ENCODE measurements at regions of chr18 and their contacts with region 1.

Region 1: DNA sequence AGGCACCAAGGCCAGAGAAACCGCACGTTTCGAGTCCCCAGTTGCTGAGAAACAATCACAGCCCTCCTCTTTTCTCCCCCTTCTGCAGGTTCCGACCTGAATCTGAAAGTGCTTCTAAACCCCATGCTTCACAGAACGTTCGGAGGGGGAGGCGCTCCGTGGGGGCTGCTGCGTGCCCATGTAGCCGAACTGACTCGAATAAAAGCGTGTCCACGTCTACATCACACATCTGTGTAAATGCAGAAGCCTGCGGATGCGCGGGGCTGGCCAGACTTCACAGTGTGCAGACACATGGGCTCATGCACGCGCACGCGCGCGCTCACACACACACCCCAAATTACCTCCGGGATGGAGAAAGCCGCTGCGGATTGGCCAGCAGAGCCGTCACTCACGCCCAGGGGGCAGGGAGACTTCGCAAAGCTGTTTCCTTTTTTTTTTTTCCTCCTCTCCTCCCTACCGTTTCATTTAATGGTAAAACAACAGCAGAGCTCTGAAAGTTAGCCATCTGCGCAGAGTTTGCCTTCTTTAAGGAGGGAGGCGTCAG is 2.3 kb downstream of the ZNF516 start:
- DNase-seq: peak; percentile 98
- H3K4me3 Mint-ChIP-seq: peak overlapping the region; percentile 73
- H3K27ac Mint-ChIP-seq: peak overlapping the region; percentile 66
- H3K4me1 Mint-ChIP-seq: peaks cover 17% of the 10 kb centered on the region
- H3K27me3 Mint-ChIP-seq: no peaks in the 10 kb centered on the region
- CTCF ChIP-seq: no peak

Region 2: DNA sequence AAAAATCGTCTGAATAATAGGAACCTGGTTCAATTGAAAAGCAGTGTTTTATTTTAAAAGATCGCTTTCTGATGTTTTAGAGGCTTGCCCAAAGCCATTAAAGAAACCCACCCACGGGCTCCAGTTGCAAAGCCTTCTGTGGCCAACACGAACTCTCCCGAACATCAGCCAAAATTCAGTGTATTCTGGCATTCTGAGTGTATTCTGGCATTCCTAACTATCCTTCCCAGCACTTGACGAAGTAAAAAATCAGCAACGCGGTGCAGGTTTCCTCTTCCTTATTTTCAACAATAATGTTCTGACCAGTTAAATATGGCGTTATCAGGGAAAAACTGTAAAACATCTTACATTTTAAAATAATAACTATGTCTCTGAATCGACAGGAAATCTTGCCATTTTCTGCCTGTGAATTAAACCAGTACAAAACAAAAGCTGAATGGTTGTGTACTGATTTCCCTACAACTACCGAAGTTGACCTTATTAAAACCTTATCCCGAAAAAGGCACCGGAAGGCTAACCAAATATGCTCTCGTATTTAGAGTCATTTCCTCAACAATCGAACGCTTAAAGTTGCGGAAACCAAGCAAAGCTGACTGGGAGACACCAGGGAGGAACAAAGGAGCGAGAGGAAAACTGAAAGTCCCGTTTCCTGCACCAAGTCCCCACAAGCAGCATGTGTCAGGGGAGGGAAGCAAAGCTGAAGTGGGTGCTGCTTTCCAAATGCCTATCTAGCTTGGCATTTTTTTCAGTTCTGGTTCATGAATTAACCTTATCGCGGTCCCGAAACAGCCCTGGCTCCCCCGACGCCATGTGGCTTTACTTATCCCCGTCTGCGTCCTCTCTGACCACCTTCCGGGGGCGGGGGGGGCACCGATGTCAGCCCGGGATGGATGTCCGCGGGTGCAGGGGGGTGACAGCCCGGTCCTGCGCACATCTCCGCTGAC is 42.0 kb before region 1 on chr18:
- CTCF ChIA-PET with region 1: no interaction called
- POLR2A ChIA-PET with region 1: interaction called, 18 read pairs
- intact Hi-C with region 1: loop called (anchors 5 kb)
- DNase-seq: peak; percentile 53
- H3K4me3 Mint-ChIP-seq: peak overlapping the region; percentile 84
- H3K27ac Mint-ChIP-seq: peak overlapping the region; percentile 98
- H3K4me1 Mint-ChIP-seq: peaks cover 57% of the 10 kb centered on the region
- H3K27me3 Mint-ChIP-seq: no peaks in the 10 kb centered on the region
- CTCF ChIP-seq: no peak

Region 3: DNA sequence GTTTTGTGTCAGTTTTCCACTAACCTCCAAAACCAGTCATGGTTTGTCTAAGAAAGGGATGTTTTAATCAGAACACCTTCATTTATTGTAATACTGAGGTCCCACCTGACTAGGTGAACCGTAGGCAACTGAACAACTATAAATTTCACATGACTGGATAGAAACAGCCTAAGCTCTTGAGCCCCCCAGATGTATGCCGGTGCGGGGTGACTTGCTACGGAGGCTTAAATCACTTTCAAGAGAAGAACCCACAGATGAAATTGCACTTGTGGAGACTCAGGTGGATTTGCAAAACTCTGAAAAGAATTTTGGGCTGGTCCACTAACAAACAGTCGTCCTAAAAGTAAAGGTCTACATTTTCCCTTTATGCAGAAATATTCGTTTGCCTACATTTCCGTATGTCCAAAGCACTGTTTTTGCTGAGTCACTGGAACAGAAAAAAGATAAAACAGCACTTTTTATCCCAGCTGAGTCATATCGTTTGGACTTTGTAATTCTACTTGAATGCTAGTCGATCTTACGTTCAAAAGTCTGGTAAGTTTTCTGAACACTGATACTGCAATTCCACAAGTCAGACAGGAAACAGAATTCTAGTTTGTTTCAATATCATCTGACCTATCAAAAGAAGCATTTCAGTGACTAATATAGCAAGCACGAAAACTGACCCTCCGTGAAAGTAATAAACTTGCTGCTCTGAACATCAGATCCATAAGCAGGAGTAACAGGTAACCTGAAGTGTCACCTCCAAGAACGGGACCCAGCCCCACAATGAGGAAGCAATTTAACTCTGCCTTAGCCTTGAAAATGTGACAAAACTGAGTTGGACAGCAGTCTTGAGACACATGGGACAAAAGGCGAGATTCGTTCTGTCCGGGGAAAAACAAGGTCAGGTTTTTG is 15.8 kb before region 1 on chr18:
- CTCF ChIA-PET with region 1: interaction called, 3 read pairs
- POLR2A ChIA-PET with region 1: interaction called, 18 read pairs
- intact Hi-C with region 1: no loop called
- DNase-seq: peak; percentile 60
- H3K4me3 Mint-ChIP-seq: peak overlapping the region; percentile 62
- H3K27ac Mint-ChIP-seq: peak overlapping the region; percentile 74
- H3K4me1 Mint-ChIP-seq: peaks cover 32% of the 10 kb centered on the region
- H3K27me3 Mint-ChIP-seq: no peaks in the 10 kb centered on the region
- CTCF ChIP-seq: no peak

Region 4: DNA sequence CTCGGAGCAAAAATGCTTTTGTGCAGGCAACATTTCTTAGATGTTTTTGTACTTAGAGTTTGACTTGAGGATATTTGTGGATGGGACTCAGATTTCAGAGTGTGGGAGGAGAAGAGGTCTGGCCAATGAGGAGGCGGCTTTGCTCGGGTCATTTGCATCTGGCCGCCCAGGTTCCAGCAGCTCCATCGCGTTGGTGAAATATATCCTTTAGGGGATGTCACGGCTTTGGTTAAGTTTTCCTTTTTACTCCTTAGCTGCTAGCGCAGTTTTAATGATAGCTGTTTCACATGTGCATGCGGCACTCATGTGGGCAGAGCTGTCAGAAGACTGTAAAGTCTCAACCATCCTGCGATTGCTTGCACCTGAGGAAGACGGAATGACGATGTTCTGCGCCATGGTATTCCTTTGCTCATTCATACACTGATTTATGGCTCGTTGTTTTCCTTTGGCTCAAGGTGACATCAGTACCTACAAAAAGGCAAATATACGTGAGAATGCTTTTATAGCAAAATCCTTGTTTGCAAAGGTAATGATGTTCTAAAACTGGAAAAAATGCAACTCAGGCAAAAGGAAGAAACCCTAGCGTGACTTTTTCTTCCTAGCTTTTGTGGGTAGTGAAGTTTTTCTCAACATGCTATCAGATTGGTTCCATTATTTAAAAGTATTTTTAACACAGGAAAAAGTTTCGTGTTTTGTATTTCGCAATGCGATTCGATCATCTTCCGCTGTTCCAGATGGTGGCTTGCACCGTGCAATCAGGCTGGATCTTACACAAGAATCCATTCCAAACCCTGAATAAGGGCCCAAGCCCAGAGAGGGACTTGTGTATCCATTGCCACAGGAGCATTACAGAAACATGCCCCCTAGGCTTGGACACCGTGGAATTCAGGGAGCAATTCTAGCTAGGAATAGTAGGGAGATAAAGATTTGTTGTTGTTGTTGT is 72.8 kb after region 1 on chr18:
- CTCF ChIA-PET with region 1: interaction called, 3 read pairs
- POLR2A ChIA-PET with region 1: interaction called, 62 read pairs
- intact Hi-C with region 1: loop called (anchors 1 kb)
- DNase-seq: peak; percentile 95
- H3K4me3 Mint-ChIP-seq: peak overlapping the region; percentile 64
- H3K27ac Mint-ChIP-seq: peak overlapping the region; percentile 98
- H3K4me1 Mint-ChIP-seq: peaks cover 34% of the 10 kb centered on the region
- H3K27me3 Mint-ChIP-seq: no peaks in the 10 kb centered on the region
- CTCF ChIP-seq: no peak

Region 5: GRCh38 chr18:76610933-76611749 is 118.4 kb after region 1 on chr18:
- CTCF ChIA-PET with region 1: no interaction called
- POLR2A ChIA-PET with region 1: interaction called, 10 read pairs
- intact Hi-C with region 1: no loop called
- DNase-seq: peak; percentile 50
- H3K4me3 Mint-ChIP-seq: peak overlapping the region; percentile 55
- H3K27ac Mint-ChIP-seq: peak overlapping the region; percentile 73
- H3K4me1 Mint-ChIP-seq: peaks cover 13% of the 10 kb centered on the region
- H3K27me3 Mint-ChIP-seq: no peaks in the 10 kb centered on the region
- CTCF ChIP-seq: no peak

Region 6: GRCh38 chr18:76686737-76687262 is 194.1 kb after region 1 on chr18:
- CTCF ChIA-PET with region 1: interaction called, 7 read pairs
- POLR2A ChIA-PET with region 1: interaction called, 6 read pairs
- intact Hi-C with region 1: loop called (anchors 1 kb)
- DNase-seq: peak; percentile 75
- H3K4me3 Mint-ChIP-seq: no peak overlapping the region
- H3K27ac Mint-ChIP-seq: peak overlapping the region; percentile 47
- H3K4me1 Mint-ChIP-seq: peaks cover 7% of the 10 kb centered on the region
- H3K27me3 Mint-ChIP-seq: no peaks in the 10 kb centered on the region
- CTCF ChIP-seq: peak; percentile 73

Region 7: GRCh38 chr18:76765649-76766048 is 272.9 kb after region 1 on chr18:
- CTCF ChIA-PET with region 1: no interaction called
- POLR2A ChIA-PET with region 1: no interaction called
- intact Hi-C with region 1: no loop called
- DNase-seq: peak; percentile 20
- H3K4me3 Mint-ChIP-seq: no peak overlapping the region
- H3K27ac Mint-ChIP-seq: no peak overlapping the region
- H3K4me1 Mint-ChIP-seq: peaks cover 13% of the 10 kb centered on the region
- H3K27me3 Mint-ChIP-seq: no peaks in the 10 kb centered on the region
- CTCF ChIP-seq: no peak